Activated CD4-positive, alpha-beta T cell treated with anti-CD3 and anti-CD28 coated beads, Interleukin-2, amount 10 ng/mL, durations not matched to agents 24 days and 14 days (primary cell): ENCODE measurements at regions of chr6 and their contacts with region 1.

Region 1: GRCh38 chr6:136792410-136793262 is at the start of gene MAP3K5:
- DNase-seq: peak; percentile 98
- H3K4me3 Mint-ChIP-seq: peak within 1 kb of the TSS; percentile 84
- H3K27ac Mint-ChIP-seq: peak within 1 kb of the TSS; percentile 96
- H3K4me1 Mint-ChIP-seq: peaks cover 26% of the 10 kb centered on the region
- H3K27me3 Mint-ChIP-seq: peaks cover 3% of the 10 kb centered on the region
- total RNA-seq, gene MAP3K5: 8.7 and 8.8 TPM in 2 replicates

Region 2: GRCh38 chr6:136289579-136290409 is 502.8 kb before region 1 on chr6 and contains the start of gene BCLAF1:
- intact Hi-C with region 1: loop called (anchors 2 kb)
- DNase-seq: peak; percentile 100
- H3K4me3 Mint-ChIP-seq: peak within 1 kb of the TSS; percentile 92
- H3K27ac Mint-ChIP-seq: peak within 1 kb of the TSS; percentile 100
- H3K4me1 Mint-ChIP-seq: peaks cover 41% of the 10 kb centered on the region
- H3K27me3 Mint-ChIP-seq: peaks cover 2% of the 10 kb centered on the region
- total RNA-seq, gene BCLAF1: 267 TPM in 2 replicates

Region 3: DNA sequence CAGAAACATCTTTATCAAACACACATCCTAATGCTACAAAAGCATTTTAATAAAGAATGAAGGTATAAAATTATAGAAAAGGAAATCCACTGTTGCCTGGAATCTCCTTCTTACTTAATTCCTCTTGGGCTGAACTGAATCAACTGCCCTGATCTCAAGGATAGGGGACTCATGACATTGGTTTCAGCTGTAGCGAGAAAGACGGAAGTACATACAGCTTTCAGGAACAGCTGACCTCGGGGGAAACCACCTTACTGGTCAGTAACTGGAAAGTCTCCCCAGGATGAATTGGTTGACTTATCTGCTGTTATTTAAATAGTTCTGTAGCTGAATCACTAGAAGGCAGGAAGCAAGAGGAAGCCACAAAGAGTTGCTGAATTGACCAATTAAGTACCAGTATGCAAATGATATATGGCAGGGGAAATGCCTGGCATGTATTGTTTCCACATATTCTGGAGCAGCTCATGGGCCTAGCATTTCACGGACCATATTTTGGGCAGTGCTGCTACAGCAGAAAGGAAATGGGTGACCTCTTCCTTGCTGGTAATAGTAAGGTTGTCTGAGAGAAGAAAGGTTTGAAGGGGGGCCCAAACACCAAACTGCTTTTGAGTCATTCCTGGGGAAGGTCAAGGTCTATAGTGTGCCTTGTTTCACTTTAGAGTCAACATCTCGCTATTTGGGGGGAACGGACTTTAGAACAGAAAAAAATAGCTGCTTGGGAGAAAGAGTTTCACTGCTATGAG is 198.7 kb before region 1 on chr6:
- intact Hi-C with region 1: loop called (anchors 1 kb)
- DNase-seq: peak; percentile 83
- H3K4me3 Mint-ChIP-seq: peak overlapping the region; percentile 73
- H3K27ac Mint-ChIP-seq: peak overlapping the region; percentile 96
- H3K4me1 Mint-ChIP-seq: peaks cover 35% of the 10 kb centered on the region
- H3K27me3 Mint-ChIP-seq: no peaks in the 10 kb centered on the region

Region 4: DNA sequence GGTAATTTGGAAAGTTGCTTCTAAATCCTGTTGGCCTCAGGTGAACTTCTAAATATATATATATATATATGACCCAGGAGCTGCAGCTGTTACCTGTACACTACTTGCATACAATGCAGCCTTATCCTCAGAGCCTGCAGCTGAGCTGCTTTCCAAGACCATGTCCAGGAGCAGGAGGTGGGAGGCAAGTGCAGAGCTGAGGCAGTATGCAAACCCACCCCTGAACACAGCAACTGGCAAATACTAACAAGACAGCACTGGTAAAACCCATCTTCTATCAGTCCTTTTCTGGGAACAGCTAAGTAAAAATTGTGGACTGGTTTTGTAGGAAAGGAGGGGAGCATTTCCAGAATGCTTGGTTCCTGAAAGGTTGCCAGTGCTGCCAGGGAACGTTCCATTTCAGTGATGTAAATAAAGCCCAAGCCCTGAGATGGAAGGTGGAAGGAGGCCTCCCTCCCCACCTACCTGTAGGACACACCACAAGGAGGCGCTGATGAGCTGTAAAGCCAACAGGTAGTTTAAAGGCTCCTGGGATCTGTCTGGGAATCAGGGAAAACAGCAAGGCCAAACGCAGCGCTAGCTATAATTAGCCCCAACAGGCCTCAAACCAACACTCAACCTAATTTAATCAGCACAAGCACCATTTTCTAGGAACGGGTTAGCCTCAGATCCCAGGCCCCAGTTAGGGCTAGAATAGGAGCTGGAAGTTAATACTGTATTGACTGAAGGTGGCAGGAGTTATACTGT is 148.6 kb before region 1 on chr6:
- intact Hi-C with region 1: loop called (anchors 1 kb)
- DNase-seq: peak; percentile 94
- H3K4me3 Mint-ChIP-seq: no peak overlapping the region
- H3K27ac Mint-ChIP-seq: no peak overlapping the region
- H3K4me1 Mint-ChIP-seq: peaks cover 7% of the 10 kb centered on the region
- H3K27me3 Mint-ChIP-seq: no peaks in the 10 kb centered on the region

Region 5: DNA sequence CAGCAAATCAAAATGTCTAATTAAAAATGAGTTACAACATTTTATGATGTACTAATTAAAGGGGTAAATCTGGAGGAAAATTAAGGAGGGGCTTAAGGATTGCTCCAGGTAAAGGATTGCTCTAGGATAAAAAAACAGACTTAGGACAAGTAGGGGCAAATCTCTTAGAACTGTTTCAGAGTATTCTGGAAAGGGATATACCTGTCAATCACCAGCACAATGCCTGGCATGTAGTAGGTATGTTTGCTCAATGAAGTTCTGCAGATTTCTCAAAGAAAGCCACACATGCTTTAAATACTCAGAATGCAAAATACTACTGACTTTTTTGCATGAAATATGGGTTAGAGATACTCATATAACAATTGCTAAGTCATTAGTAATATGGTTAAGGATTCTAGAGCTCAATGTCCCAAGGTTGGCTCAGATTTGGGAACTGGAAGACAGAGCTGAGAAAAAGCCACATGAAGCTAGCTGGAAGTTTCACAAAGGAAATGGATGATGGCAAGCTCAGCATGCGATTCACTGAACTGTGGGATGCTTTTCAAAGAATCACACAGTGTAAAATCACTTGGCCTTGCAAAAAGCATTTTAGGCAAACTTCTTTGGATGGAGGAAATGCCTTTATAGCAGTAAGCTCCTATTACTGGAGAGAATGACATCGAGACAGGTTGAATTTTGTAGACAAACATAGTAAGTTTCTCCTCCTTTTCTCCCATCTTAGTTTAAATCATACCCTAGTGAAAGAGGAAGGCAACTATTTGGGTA is 73.2 kb before region 1 on chr6:
- intact Hi-C with region 1: loop called (anchors 2 kb)
- DNase-seq: peak; percentile 64
- H3K4me3 Mint-ChIP-seq: peak overlapping the region; percentile 63
- H3K27ac Mint-ChIP-seq: peak overlapping the region; percentile 55
- H3K4me1 Mint-ChIP-seq: peaks cover 43% of the 10 kb centered on the region
- H3K27me3 Mint-ChIP-seq: no peaks in the 10 kb centered on the region

Region 6: DNA sequence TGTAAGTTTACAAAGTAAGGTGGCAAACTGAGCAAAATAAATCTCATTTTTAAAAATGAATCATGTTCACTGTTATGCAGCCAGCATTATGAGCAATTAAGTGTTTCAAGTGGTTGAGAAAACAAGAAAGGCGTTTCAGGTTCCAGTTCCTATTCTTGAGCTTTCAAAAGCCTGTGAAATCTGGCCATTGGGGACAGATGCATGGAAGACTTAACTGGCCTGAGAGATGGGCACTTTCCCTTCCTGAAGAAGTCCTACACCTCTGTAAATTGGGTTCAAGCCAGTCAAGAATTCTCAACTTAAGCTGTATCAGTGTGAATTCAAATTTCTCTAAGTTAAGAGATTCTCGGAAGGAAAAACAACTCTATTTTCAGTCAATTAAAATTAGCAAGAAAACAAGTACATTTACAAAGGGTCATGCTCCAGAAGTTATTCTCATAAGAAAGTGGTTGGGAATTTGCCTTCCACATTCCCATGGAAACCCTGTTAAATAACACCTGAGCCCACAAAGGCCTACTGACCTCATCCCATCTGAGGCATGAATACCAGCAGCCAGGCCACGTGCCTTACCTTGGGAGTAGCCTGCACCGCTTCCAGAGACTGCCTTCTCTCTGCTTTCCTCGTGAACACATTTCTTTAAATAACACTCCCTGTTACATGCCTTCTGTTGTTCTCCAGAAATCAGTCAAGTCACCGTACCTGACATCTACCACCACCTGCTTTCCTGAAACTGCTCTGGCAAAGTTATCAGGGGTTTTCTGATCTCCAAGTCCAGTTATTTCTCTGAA is 19.8 kb before region 1 on chr6:
- intact Hi-C with region 1: loop called (anchors 2 kb)
- DNase-seq: no peak
- H3K4me3 Mint-ChIP-seq: no peak overlapping the region
- H3K27ac Mint-ChIP-seq: peak overlapping the region; percentile 11
- H3K4me1 Mint-ChIP-seq: peaks cover 43% of the 10 kb centered on the region
- H3K27me3 Mint-ChIP-seq: no peaks in the 10 kb centered on the region

Region 7: DNA sequence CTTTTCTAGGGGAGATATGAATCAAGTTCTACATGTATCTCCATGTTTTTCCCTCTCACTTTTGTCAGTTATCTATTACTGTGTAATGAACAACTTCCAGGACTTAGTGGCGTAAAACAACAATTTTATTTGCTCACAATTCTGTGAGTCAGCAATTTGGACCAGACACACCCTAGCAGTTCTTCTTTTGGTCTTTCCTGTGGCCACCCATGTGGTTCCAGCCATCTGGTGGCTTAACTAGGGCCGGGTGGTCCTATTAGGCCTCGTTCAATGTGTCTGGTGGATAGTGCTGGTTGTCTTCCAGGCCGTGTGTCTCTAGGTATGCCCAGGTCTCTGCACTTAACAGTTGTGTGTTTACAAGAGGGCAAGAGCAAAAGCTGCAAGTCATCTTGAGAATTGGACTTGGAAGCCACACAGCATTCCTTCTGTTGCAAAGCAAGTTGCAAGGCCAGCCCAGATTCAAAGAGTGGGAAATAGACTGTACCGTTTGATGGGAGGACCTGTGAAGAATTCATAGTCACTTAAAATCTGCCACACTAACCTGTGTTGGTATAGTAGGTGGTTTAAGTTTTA is 108.7 kb after region 1 on chr6:
- intact Hi-C with region 1: no loop called
- DNase-seq: no peak
- H3K4me3 Mint-ChIP-seq: no peak overlapping the region
- H3K27ac Mint-ChIP-seq: no peak overlapping the region
- H3K4me1 Mint-ChIP-seq: no peaks in the 10 kb centered on the region
- H3K27me3 Mint-ChIP-seq: no peaks in the 10 kb centered on the region

Region 8: DNA sequence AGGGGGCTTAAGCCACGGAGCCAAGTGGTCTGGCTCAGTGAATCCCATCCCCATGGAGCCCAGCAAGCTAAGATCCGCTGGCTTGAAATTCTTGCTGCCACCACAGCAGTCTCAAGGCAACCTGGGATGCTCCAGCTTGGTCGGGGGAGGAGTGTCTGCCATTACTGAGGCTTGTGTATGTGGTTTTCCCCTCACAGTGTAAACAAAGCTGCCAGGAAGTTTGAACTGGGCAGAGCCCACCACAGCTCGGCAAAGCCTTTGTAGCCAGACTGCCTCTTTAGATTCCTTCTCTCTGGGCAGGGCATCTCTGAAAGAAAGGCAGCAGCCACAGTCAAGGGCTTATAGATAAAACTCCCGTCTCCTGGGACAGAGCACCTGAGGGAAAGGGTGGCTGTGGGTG is 277.7 kb after region 1 on chr6:
- intact Hi-C with region 1: no loop called
- DNase-seq: no peak
- H3K4me3 Mint-ChIP-seq: no peak overlapping the region
- H3K27ac Mint-ChIP-seq: no peak overlapping the region
- H3K4me1 Mint-ChIP-seq: no peaks in the 10 kb centered on the region
- H3K27me3 Mint-ChIP-seq: peaks cover 75% of the 10 kb centered on the region